Endothelial cell of umbilical vein (primary cell): ENCODE measurements at regions of chr1 and their contacts with region 1.

Region 1: GRCh38 chr1:26169669-26170471 is at the start of gene ZNF593:
- DNase-seq: peak; percentile 88
- H3K4me3 ChIP-seq: peak within 1 kb of the TSS; percentile 46 to 72 (median 67)
- H3K27ac ChIP-seq: peak within 1 kb of the TSS; percentile 47
- H3K4me1 ChIP-seq: no peaks in the 10 kb centered on the region
- H3K27me3 ChIP-seq: no peaks in the 10 kb centered on the region
- CTCF ChIP-seq: peak; percentile 92 to 99
- POLR2A ChIP-seq: peak; percentile 88
- total RNA-seq, gene ZNF593: 30.5 and 41.0 TPM in 2 replicates

Region 2: GRCh38 chr1:26035959-26036755 is 133.7 kb before region 1 on chr1:
- CTCF ChIA-PET with region 1: interaction called, 23 read pairs
- POLR2A ChIA-PET with region 1: no interaction called
- dilution Hi-C with region 1: no loop called
- intact Hi-C with region 1: no loop called
- DNase-seq: peak; percentile 74
- H3K4me3 ChIP-seq: peak overlapping the region; percentile 65 to 85 (median 81)
- H3K27ac ChIP-seq: no peak overlapping the region
- H3K4me1 ChIP-seq: peaks cover 15% of the 10 kb centered on the region
- H3K27me3 ChIP-seq: peaks cover 0 to 3% of the 10 kb centered on the region in 2 experiments
- CTCF ChIP-seq: peak; percentile 98 to 99
- POLR2A ChIP-seq: no peak

Region 3: DNA sequence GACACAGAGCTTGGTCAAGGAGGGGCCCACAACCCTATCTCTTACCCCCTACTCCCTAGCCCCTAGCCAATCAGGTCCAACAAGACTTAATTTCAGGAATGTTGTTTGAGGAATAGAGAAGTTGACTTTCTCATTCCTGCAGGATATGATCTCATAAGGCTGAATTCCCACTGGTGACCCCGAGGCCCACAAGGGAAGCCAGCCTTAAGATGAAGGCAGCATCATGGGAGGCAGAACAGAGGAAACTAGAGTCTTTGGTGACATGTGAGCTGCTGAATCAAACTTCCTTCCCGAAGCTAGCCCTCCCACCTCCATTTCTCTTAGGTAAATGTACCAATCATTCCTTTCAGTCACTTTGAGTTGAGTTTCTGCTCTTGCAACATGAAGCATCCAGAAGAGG is 67.3 kb before region 1 on chr1:
- CTCF ChIA-PET with region 1: interaction called, 26 read pairs
- POLR2A ChIA-PET with region 1: no interaction called
- dilution Hi-C with region 1: no loop called
- intact Hi-C with region 1: no loop called
- DNase-seq: peak; percentile 68
- H3K4me3 ChIP-seq: no peak overlapping the region
- H3K27ac ChIP-seq: peak overlapping the region; percentile 62
- H3K4me1 ChIP-seq: peaks cover 30% of the 10 kb centered on the region
- H3K27me3 ChIP-seq: no peaks in the 10 kb centered on the region
- CTCF ChIP-seq: no peak
- POLR2A ChIP-seq: no peak

Region 4: GRCh38 chr1:26111530-26112406 is 58.1 kb before region 1 on chr1 and contains the start of gene PDIK1L:
- CTCF ChIA-PET with region 1: interaction called, 12 read pairs
- POLR2A ChIA-PET with region 1: no interaction called
- dilution Hi-C with region 1: no loop called
- intact Hi-C with region 1: no loop called
- DNase-seq: peak; percentile 96
- H3K4me3 ChIP-seq: peak within 1 kb of the TSS; percentile 63 to 99 (median 75)
- H3K27ac ChIP-seq: peak within 1 kb of the TSS; percentile 47
- H3K4me1 ChIP-seq: peaks cover 11% of the 10 kb centered on the region
- H3K27me3 ChIP-seq: no peaks in the 10 kb centered on the region
- CTCF ChIP-seq: no peak
- POLR2A ChIP-seq: peak; percentile 72
- total RNA-seq, gene PDIK1L: 5.6 and 8.0 TPM in 2 replicates

Region 5: GRCh38 chr1:26132128-26132833 is 37.6 kb before region 1 on chr1:
- CTCF ChIA-PET with region 1: no interaction called
- POLR2A ChIA-PET with region 1: no interaction called
- dilution Hi-C with region 1: no loop called
- intact Hi-C with region 1: no loop called
- DNase-seq: no peak
- H3K4me3 ChIP-seq: no peak overlapping the region
- H3K27ac ChIP-seq: no peak overlapping the region
- H3K4me1 ChIP-seq: peaks cover 5% of the 10 kb centered on the region
- H3K27me3 ChIP-seq: no peaks in the 10 kb centered on the region
- CTCF ChIP-seq: no peak
- POLR2A ChIP-seq: no peak

Region 6: DNA sequence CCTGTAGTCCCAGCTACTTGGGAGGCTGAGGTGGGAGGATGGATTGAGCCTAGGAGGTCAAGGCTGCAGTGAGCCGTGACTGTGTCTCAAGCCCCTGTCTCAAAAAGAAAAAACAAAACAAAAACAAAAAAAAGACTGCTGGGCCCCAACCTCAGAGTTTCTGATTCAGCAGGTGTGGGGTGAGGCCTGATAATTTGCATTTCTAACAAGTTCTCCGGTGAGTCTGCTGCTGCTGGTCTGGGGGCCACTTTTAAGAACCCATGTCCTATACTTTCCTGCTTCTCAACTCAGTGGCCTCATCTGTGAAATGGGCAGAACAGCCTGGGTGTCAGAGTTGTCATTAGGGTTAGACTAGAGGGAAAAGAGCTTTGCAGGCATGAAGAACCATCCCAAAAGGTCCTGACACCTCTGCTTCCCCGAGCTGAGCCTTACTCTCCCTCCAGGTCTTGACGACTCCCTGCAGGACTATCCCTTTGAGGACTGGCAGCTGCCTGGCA is 10.2 kb after region 1 on chr1:
- CTCF ChIA-PET with region 1: interaction called, 10 read pairs
- POLR2A ChIA-PET with region 1: no interaction called
- dilution Hi-C with region 1: no loop called
- intact Hi-C with region 1: no loop called
- DNase-seq: no peak
- H3K4me3 ChIP-seq: no peak overlapping the region
- H3K27ac ChIP-seq: no peak overlapping the region
- H3K4me1 ChIP-seq: no peaks in the 10 kb centered on the region
- H3K27me3 ChIP-seq: no peaks in the 10 kb centered on the region
- CTCF ChIP-seq: no peak
- POLR2A ChIP-seq: no peak

Region 7: DNA sequence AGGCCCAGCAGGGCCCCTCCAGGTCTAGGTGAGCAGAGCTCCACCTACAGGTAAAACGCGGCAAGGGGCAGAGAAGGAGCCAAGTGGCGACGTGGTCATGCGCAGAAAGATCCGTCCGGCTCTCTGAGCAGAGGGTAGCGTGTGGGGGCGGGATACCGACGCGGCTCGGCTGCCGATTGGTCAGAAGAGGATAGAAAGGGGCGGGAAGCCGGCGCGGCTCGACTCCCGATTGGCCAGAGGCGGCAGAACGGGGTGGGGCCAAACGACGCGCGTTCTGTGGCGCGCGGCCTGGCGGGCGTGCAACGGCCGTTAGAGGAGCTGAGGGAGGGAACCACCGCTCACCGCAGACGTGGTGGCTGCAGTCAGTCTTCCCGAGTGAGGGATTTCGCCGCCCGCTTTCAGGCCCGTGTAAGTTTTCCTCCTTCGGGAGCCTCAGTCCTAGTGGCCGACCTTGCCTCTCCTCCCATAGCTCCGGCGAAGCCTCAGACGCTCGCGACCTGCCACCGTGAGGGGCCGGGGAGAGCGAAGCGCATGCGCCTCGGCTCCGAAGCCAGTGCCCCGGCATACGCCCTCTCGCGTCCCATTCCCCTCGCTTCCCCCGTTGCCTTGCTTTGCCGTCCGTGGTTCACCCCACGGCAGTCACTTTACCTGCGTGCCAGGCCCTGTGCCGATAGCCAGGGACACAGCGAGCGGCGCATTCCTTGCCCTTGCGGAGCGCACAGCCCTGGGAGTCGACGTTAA is 64.2 kb after region 1 on chr1 and contains the start of gene CEP85:
- CTCF ChIA-PET with region 1: interaction called, 44 read pairs
- POLR2A ChIA-PET with region 1: no interaction called
- dilution Hi-C with region 1: no loop called
- intact Hi-C with region 1: loop called (anchors 1 kb)
- DNase-seq: peak; percentile 98
- H3K4me3 ChIP-seq: peak within 1 kb of the TSS; percentile 35 to 78 (median 65)
- H3K27ac ChIP-seq: peak within 1 kb of the TSS; percentile 9
- H3K4me1 ChIP-seq: peaks cover 12% of the 10 kb centered on the region
- H3K27me3 ChIP-seq: no peaks in the 10 kb centered on the region
- CTCF ChIP-seq: peak; percentile 87 to 92
- POLR2A ChIP-seq: peak; percentile 81
- total RNA-seq, gene CEP85: 16.2 and 17.8 TPM in 2 replicates

Region 8: GRCh38 chr1:26291433-26291832 is 121.6 kb after region 1 on chr1:
- CTCF ChIA-PET with region 1: no interaction called
- POLR2A ChIA-PET with region 1: no interaction called
- dilution Hi-C with region 1: no loop called
- intact Hi-C with region 1: no loop called
- DNase-seq: no peak
- H3K4me3 ChIP-seq: no peak overlapping the region
- H3K27ac ChIP-seq: no peak overlapping the region
- H3K4me1 ChIP-seq: no peaks in the 10 kb centered on the region
- H3K27me3 ChIP-seq: no peaks in the 10 kb centered on the region
- CTCF ChIP-seq: no peak
- POLR2A ChIP-seq: no peak

Region 9: GRCh38 chr1:26363549-26364448 is 193.9 kb after region 1 on chr1:
- CTCF ChIA-PET with region 1: interaction called, 9 read pairs
- POLR2A ChIA-PET with region 1: no interaction called
- dilution Hi-C with region 1: no loop called
- intact Hi-C with region 1: loop called (anchors 1 kb)
- DNase-seq: peak; percentile 67
- H3K4me3 ChIP-seq: no peak overlapping the region
- H3K27ac ChIP-seq: no peak overlapping the region
- H3K4me1 ChIP-seq: no peaks in the 10 kb centered on the region
- H3K27me3 ChIP-seq: peaks cover 18 to 23% of the 10 kb centered on the region in 2 experiments
- CTCF ChIP-seq: peak; percentile 96 to 99
- POLR2A ChIP-seq: no peak